ENCODE measurements at regions of chr1 and their contacts with region 1.

Region 1: GRCh38 chr1:8510041-8510823 is 192.3 kb downstream of the SLC45A1 start:
- DNase-seq: peak in 5 of 9 experiments; percentile 23 to 81 (median 64)
- ATAC-seq: peak; percentile 90
- H3K4me3 ChIP-seq: peak overlapping the region in 1 of 2 experiments; percentile 18
- H3K4me3 Mint-ChIP-seq: peak overlapping the region; percentile 69
- H3K27ac ChIP-seq: peak overlapping the region; percentile 44
- H3K27ac Mint-ChIP-seq: peak overlapping the region; percentile 93
- H3K4me1 ChIP-seq: peaks cover 33% of the 10 kb centered on the region
- H3K4me1 Mint-ChIP-seq: peaks cover 37% of the 10 kb centered on the region
- H3K27me3 ChIP-seq: no peaks in the 10 kb centered on the region
- H3K27me3 Mint-ChIP-seq: no peaks in the 10 kb centered on the region
- CTCF ChIP-seq: no peak

Region 2: DNA sequence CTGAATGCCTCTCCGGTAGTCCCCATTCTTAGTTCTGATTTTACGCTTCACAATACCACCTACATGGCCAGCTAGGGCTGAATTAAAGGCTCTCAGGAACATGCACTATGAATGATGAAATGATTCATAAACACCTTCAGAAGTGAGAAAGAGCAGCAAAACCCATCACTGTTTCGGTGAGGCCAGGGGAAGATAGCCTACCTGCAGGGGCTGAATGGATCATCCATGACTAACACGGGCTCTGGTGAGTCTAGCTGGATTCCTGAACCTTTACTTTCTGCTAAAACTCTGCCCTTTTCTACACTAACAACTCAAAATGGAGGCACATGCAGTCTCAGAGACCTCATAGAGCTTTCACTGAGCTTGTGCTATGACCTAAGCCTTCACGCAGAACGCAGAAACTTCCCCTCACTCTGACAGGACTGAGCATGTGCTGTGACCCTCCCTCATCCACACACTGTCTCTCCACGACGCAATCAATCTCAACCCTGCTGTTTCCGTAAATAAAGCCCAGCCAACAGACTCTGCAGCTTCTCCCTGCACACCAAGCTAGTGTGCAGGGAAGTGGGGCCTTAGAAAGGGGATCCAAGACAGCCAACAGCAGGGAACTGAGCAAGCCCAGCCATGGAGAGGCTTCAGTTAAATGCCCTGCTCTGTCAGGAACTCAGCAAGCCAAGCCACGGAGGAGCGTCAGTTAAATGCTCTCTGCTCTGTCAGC is 15.5 kb after region 1 on chr1:
- CTCF ChIA-PET with region 1: interaction called, 6 read pairs
- POLR2A ChIA-PET with region 1: interaction called, 10 read pairs
- intact Hi-C with region 1: loop called (anchors 1 kb)
- DNase-seq: peak; percentile 35 to 92 (median 60)
- ATAC-seq: peak; percentile 93
- H3K4me3 ChIP-seq: peak overlapping the region; percentile 44 to 71
- H3K4me3 Mint-ChIP-seq: no peak overlapping the region
- H3K27ac ChIP-seq: peak overlapping the region; percentile 71 to 92
- H3K27ac Mint-ChIP-seq: no peak overlapping the region
- H3K4me1 ChIP-seq: peaks cover 44% of the 10 kb centered on the region
- H3K4me1 Mint-ChIP-seq: peaks cover 43% of the 10 kb centered on the region
- H3K27me3 ChIP-seq: no peaks in the 10 kb centered on the region
- H3K27me3 Mint-ChIP-seq: no peaks in the 10 kb centered on the region
- CTCF ChIP-seq: no peak

Region 3: GRCh38 chr1:8540261-8540941 is 30.2 kb after region 1 on chr1:
- CTCF ChIA-PET with region 1: no interaction called
- POLR2A ChIA-PET with region 1: no interaction called
- intact Hi-C with region 1: no loop called
- DNase-seq: no peak
- ATAC-seq: no peak
- H3K4me3 ChIP-seq: no peak overlapping the region
- H3K4me3 Mint-ChIP-seq: no peak overlapping the region
- H3K27ac ChIP-seq: no peak overlapping the region
- H3K27ac Mint-ChIP-seq: no peak overlapping the region
- H3K4me1 ChIP-seq: no peaks in the 10 kb centered on the region
- H3K4me1 Mint-ChIP-seq: peaks cover 12% of the 10 kb centered on the region
- H3K27me3 ChIP-seq: no peaks in the 10 kb centered on the region
- H3K27me3 Mint-ChIP-seq: no peaks in the 10 kb centered on the region
- CTCF ChIP-seq: no peak

Measured in CD8-positive, alpha-beta T cell (primary cell).